SK-N-SH (cell line): ENCODE measurements at regions of chr2 and their contacts with region 1.

Region 1: DNA sequence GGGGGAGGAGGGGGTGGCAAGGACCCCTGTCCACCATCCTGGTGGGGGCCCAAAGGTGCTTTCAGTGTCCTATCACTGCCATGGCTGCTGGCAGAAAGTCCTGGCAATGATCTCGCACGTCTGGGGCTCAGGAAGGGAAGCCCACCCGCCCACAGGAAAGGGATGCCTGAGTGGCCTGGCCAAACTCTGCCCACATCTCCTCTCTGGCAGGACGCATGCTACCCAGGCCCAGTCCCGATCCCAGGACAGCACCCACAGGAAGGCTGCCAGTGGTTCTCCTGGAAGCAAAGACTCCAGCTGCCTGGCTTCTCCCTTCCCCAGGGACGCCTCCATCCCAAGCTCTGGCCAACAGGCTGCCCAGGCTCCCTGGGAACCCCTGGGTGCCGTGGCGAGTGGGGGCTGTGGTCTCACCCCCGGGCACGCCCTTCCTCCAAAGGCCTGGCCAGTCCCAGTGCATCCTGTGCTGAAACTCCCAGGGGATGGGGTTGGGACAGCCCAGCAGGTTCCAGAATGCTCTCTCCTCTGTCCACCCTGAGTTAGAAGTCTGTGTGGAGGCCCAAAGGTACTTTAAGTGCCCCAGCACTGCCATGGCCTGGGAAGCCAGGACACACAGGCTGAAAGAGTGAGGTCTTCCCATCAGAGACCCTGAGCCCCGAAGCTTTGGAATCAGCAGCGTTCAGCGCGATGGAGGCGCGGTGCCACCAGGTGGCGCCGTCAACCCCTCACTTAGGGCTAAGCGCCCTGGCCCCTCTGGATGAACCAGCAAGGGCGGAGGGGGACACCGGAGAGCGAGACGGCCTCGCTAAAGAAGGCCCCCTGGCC is 29.8 kb upstream of the TAF1B start:
- DNase-seq: peak; percentile 96
- H3K4me3 ChIP-seq: peak overlapping the region in 1 of 2 experiments; percentile 4; a peak in 1 of 4 replicates
- H3K27ac ChIP-seq: no peak overlapping the region
- H3K4me1 ChIP-seq: peaks cover 0 to 10% of the 10 kb centered on the region in 2 experiments; a peak in 1 of 4 replicates
- H3K27me3 ChIP-seq: no peaks in the 10 kb centered on the region
- CTCF ChIP-seq: peak; percentile 98
- EP300 ChIP-seq: no peak
- RAD21 ChIP-seq: peak; percentile 91

Region 2: GRCh38 chr2:9799665-9800632 is 13.6 kb before region 1 on chr2:
- CTCF ChIA-PET with region 1: interaction called, 207 read pairs
- POLR2A ChIA-PET with region 1: no interaction called
- DNase-seq: peak; percentile 98
- H3K4me3 ChIP-seq: no peak overlapping the region; a peak in 1 of 4 replicates
- H3K27ac ChIP-seq: no peak overlapping the region
- H3K4me1 ChIP-seq: peaks cover 8 to 15% of the 10 kb centered on the region in 2 experiments; a peak in 3 of 4 replicates
- H3K27me3 ChIP-seq: no peaks in the 10 kb centered on the region
- CTCF ChIP-seq: peak; percentile 99
- EP300 ChIP-seq: no peak
- RAD21 ChIP-seq: peak; percentile 96

Region 3: DNA sequence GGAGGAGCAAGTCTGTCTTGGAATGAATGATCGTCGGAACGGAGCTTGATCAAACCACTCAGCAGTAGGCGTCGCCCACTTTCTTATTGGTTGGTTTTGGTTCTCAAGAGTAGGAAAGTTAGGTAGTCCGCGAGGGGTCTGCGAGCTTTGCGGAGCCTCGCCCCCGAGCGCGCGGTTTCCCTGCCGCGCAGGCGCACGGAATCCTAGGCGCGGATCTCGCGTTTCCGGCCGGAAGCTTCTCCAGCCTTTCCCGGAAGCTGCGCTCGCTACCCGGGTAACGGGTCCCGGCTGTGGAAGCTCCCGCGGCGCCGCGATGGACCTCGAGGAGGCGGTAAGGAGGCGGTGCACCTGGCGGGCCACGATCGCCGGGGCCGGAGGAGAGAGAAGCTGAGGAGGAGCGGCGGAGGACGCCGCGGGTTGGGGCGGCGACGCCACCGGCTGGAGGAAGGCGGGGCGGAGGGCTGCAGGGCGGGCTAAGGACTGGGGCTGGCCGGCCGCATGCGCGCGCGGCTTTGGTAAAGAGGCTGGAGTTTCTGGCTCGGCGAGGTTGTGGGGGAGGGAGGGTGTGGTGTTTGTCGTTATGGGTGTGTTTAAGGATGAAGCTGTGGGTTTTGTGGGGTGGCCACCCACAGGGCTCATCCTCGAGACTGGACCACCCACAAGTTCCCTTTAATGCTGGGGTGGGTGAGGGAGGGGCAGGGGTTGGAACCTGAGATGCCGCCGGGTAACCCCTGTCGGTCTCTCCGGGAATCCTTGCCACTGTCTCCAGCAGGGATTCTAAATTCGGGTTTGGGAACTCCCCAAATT is 29.9 kb after region 1 on chr2 and contains the start of gene TAF1B:
- CTCF ChIA-PET with region 1: interaction called, 83 read pairs
- POLR2A ChIA-PET with region 1: interaction called, 6 read pairs
- DNase-seq: peak; percentile 99
- H3K4me3 ChIP-seq: peak within 1 kb of the TSS; percentile 60 to 86
- H3K27ac ChIP-seq: peak within 1 kb of the TSS; percentile 89 to 95
- H3K4me1 ChIP-seq: peaks cover 15 to 20% of the 10 kb centered on the region in 2 experiments
- H3K27me3 ChIP-seq: no peaks in the 10 kb centered on the region
- CTCF ChIP-seq: peak; percentile 43
- EP300 ChIP-seq: no peak
- RAD21 ChIP-seq: no peak
- polyA plus RNA-seq, gene TAF1B: 7.8 and 8.3 TPM in 2 replicates

Region 4: DNA sequence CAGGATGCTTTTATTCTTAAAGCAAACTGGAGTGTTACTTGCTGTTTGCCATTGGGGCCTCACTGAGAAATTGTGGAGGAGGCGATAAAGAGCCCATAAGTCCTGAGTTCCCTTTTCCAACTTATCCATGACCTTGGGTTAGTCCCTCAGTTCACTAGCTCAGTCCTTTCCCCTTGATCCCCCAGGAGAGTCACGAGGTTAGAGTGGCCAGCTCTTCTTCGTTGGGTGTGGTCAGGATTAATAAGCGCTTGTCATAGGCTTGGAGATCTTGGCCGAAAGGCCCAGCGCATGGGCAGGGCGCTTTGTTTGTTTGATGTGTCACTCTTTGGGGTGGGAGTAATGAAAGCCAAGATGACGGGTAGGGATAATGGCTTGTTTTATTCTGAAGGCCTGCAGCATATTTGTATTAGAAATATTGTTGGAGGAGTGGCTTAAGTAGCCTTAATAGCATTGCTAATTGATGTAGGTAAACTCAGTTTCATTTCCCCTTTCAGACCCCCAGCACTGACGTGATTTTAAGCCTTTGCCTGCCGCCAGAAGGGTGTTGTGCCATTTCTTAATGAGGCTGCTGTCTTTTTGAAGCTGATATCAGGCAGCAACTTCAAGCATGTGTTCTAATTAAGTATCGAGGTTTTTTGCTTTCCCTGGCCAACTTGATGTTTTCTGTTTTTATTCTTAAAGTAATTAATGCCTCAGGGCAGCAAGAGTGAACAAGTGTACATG is 153.7 kb after region 1 on chr2:
- CTCF ChIA-PET with region 1: interaction called, 24 read pairs
- POLR2A ChIA-PET with region 1: no interaction called
- DNase-seq: no peak
- H3K4me3 ChIP-seq: no peak overlapping the region
- H3K27ac ChIP-seq: no peak overlapping the region; a peak in 1 of 4 replicates
- H3K4me1 ChIP-seq: peaks cover 0 to 17% of the 10 kb centered on the region in 2 experiments; a peak in 2 of 4 replicates
- H3K27me3 ChIP-seq: no peaks in the 10 kb centered on the region
- CTCF ChIP-seq: no peak
- EP300 ChIP-seq: no peak
- RAD21 ChIP-seq: no peak

Region 5: GRCh38 chr2:10019174-10019573 is 205.7 kb after region 1 on chr2:
- CTCF ChIA-PET with region 1: interaction called, 18 read pairs
- POLR2A ChIA-PET with region 1: no interaction called
- DNase-seq: no peak
- H3K4me3 ChIP-seq: no peak overlapping the region
- H3K27ac ChIP-seq: no peak overlapping the region; a peak in 1 of 4 replicates
- H3K4me1 ChIP-seq: peaks cover 0 to 8% of the 10 kb centered on the region in 2 experiments; a peak in 2 of 4 replicates
- H3K27me3 ChIP-seq: peaks cover 6% of the 10 kb centered on the region; the same call in 1 of the 2 replicates
- CTCF ChIP-seq: no peak
- EP300 ChIP-seq: no peak
- RAD21 ChIP-seq: no peak

Region 6: DNA sequence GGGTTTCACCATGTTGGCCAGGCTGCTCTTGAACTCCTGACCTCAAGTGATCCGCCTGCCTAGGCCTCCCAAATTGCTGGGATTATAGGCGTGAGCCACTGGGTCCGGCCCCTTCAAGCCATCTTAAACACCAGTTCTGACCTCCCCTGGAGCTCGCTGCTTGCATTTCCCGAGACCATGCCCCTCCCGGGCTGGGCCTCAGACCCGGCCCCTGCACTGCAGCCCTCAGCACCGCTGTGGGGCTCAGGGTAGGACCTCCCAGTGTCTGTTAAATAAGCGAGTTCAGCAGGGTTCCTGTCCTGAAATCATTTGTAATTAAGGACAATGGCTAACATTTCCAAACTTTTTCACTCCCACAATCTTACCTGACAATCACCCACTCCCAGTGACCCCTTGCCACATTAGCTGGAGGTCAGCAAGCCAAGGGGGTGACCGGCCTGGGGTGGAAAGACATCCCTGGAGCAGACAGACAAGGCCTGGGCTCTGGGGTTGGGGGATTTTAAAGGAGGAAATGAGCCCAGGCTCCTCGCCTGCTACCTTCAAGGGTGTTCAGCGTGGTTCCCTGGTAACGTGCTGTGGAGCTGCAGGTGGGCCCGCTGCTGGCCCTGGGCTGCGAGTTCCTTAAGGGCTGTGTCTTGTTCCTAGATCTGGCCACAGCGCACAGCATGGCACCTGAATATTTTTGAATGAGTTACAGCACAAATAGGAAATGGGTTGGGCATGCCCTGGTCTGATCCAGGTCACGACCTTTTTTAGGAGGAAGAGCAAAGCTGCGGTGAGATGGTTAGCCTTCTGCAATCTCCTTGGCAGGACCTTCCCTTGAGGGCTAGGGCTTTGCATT is 251.6 kb after region 1 on chr2:
- CTCF ChIA-PET with region 1: interaction called, 19 read pairs
- POLR2A ChIA-PET with region 1: no interaction called
- DNase-seq: no peak
- H3K4me3 ChIP-seq: no peak overlapping the region
- H3K27ac ChIP-seq: no peak overlapping the region
- H3K4me1 ChIP-seq: peaks cover 0 to 8% of the 10 kb centered on the region in 2 experiments; a peak in 1 of 4 replicates
- H3K27me3 ChIP-seq: no peaks in the 10 kb centered on the region
- CTCF ChIP-seq: no peak
- EP300 ChIP-seq: no peak
- RAD21 ChIP-seq: no peak